ENCODE measurements at regions of chr16 and their contacts with region 1.

Region 1: DNA sequence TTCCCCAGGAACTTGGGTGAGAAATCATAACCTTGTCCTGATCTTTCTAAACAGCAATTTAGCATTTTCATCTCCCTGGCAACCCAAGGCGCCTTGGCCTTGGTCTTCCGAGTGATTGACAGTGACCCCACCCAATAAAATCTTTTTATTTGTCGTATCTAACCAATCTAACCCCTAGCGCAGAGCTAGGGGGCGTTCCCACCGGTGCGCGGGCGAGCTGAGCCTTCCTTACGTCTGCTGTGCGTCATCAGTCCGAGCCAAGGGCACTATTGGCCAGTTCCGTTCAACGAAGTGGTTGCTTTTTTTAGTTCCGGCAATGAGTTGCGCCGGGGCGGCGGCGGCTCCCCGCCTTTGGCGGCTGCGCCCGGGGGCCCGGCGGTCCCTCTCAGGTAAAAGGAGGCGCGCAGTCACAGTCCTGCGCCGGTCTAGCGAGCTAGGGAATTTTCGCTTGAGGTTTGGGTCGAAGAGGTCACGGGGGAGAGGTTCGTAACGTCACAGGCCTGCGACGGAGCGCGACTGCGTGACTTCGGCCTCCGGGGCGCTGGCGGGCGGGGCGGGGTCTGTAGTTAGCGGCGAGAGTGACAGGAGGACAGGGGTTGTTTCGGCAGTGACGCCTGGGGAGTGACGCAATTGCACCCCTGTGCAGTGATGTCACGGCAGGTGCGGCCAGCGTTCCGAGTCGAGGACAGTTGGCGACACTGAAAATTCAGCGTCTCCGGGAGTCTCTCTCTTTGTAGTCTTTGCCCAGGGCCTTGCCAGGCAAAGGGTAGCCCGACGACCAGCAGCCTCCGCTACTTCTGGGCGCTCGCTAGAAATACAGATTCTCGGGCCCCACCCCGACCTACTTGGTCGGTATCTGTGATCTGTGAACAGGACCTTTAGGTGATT is at the start of gene COQ7:
- DNase-seq: peak; percentile 98 to 100
- ATAC-seq: peak; percentile 86 to 95 (median 86)
- H3K4me3 ChIP-seq: peak within 1 kb of the TSS; percentile 53
- H3K4me3 Mint-ChIP-seq: peak within 1 kb of the TSS; percentile 92
- H3K27ac ChIP-seq: peak within 1 kb of the TSS; percentile 92
- H3K27ac Mint-ChIP-seq: peak within 1 kb of the TSS; percentile 99
- H3K4me1 ChIP-seq: peaks cover 12% of the 10 kb centered on the region
- H3K4me1 Mint-ChIP-seq: peaks cover 11 to 15% of the 10 kb centered on the region in 2 donors
- H3K27me3 ChIP-seq: no peaks in the 10 kb centered on the region
- H3K27me3 Mint-ChIP-seq: peaks cover 0 to 5% of the 10 kb centered on the region in 2 donors
- CTCF ChIP-seq: no peak
- total RNA-seq, gene COQ7: 16.3 to 17.9 (median 17.1) TPM

Region 2: GRCh38 chr16:18931756-18932155 is 135.8 kb before region 1 on chr16:
- intact Hi-C with region 1: loop called (anchors 1 kb)
- DNase-seq: no peak
- ATAC-seq: no peak
- H3K4me3 ChIP-seq: no peak overlapping the region
- H3K4me3 Mint-ChIP-seq: no peak overlapping the region
- H3K27ac ChIP-seq: no peak overlapping the region
- H3K27ac Mint-ChIP-seq: no peak overlapping the region
- H3K4me1 ChIP-seq: peaks cover 5% of the 10 kb centered on the region
- H3K4me1 Mint-ChIP-seq: peaks cover 0 to 6% of the 10 kb centered on the region in 2 donors
- H3K27me3 ChIP-seq: no peaks in the 10 kb centered on the region
- H3K27me3 Mint-ChIP-seq: peaks cover 0 to 1% of the 10 kb centered on the region in 2 donors
- CTCF ChIP-seq: no peak

Measured in natural killer cell (primary cell).